ENCODE measurements at regions of chr3 and their contacts with region 1.

Region 1: DNA sequence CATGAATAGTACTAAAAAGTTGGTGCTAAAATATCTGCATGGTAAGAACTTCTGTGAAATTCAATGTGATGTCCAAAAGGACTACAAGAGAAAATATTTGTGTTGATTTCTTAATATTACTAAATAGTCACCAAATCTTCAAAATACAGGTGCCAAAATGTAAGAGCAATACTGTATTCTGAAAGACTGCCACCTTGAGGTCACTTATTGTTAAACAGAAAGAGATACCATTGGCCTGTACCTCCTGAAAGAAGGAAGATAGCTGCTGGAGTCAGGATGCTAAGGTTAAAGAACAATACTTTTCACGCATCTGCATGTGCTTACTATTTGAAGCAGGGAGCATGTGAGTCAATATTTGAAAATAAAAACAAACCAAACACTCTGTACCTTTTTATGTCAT is 72.0 kb upstream of the LSAMP start:
- DNase-seq: no peak
- H3K4me3 ChIP-seq: no peak overlapping the region
- H3K27ac ChIP-seq: no peak overlapping the region
- H3K4me1 ChIP-seq: no peaks in the 10 kb centered on the region
- H3K27me3 ChIP-seq: no peaks in the 10 kb centered on the region
- CTCF ChIP-seq: no peak
- EP300 ChIP-seq: no peak
- POLR2A ChIP-seq: no peak

Region 2: GRCh38 chr3:116579840-116580239 is 62.5 kb after region 1 on chr3:
- intact Hi-C with region 1: no loop called
- DNase-seq: no peak
- H3K4me3 ChIP-seq: no peak overlapping the region
- H3K27ac ChIP-seq: no peak overlapping the region
- H3K4me1 ChIP-seq: no peaks in the 10 kb centered on the region
- H3K27me3 ChIP-seq: no peaks in the 10 kb centered on the region
- CTCF ChIP-seq: no peak
- EP300 ChIP-seq: no peak
- POLR2A ChIP-seq: no peak

Region 3: GRCh38 chr3:116678853-116679252 is 161.5 kb after region 1 on chr3:
- intact Hi-C with region 1: no loop called
- DNase-seq: no peak
- H3K4me3 ChIP-seq: no peak overlapping the region
- H3K27ac ChIP-seq: no peak overlapping the region
- H3K4me1 ChIP-seq: no peaks in the 10 kb centered on the region
- H3K27me3 ChIP-seq: no peaks in the 10 kb centered on the region
- CTCF ChIP-seq: no peak
- EP300 ChIP-seq: no peak
- POLR2A ChIP-seq: no peak

Region 4: DNA sequence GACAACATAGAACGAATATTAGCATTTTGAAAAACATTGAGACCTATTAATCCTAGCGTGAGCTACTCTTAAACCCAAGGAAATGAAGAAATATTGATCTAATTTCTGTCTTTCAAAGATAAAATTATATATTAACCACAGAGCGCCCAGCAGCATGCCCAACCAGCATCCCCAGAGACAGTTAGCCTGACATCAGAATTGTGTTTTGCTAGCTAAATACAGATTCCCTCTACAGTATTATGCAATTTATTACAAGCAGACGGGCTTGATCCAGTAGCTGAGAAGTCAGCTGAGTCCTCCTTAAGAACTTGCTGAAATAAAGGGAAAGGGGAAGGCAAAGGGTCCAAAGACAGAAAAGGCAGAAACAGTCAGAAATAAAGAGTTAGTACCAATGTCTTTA is 185.0 kb after region 1 on chr3:
- intact Hi-C with region 1: no loop called
- DNase-seq: no peak
- H3K4me3 ChIP-seq: no peak overlapping the region
- H3K27ac ChIP-seq: no peak overlapping the region
- H3K4me1 ChIP-seq: no peaks in the 10 kb centered on the region
- H3K27me3 ChIP-seq: no peaks in the 10 kb centered on the region
- CTCF ChIP-seq: no peak
- EP300 ChIP-seq: no peak
- POLR2A ChIP-seq: no peak

Region 5: GRCh38 chr3:116886202-116886893 is 369.0 kb after region 1 on chr3:
- intact Hi-C with region 1: loop called in 1 of 4 experiments (anchors 5 kb)
- DNase-seq: no peak
- H3K4me3 ChIP-seq: no peak overlapping the region
- H3K27ac ChIP-seq: no peak overlapping the region
- H3K4me1 ChIP-seq: no peaks in the 10 kb centered on the region
- H3K27me3 ChIP-seq: no peaks in the 10 kb centered on the region
- CTCF ChIP-seq: no peak
- EP300 ChIP-seq: no peak
- POLR2A ChIP-seq: no peak

Region 6: DNA sequence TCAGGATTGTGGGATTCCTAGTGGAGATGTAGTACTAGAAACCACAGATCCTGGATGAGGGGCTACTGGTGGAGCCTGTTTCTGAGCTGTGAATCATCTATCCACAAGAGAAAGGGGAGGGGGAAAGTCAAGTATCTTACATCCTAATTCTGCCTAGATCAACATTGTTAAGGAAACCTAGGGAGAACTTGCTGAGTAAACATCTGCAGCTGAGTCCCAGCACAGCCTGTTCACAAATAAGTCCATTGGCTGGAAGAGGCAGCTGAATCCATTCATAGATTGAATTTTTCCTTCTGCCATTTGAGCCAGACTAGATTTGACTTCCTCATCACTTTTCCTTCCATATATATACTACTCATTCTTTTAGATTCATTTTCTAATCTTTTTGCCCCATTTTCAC is 652.8 kb after region 1 on chr3:
- intact Hi-C with region 1: loop called in 1 of 4 experiments (anchors 10 kb)
- DNase-seq: no peak
- H3K4me3 ChIP-seq: no peak overlapping the region
- H3K27ac ChIP-seq: no peak overlapping the region
- H3K4me1 ChIP-seq: no peaks in the 10 kb centered on the region
- H3K27me3 ChIP-seq: no peaks in the 10 kb centered on the region
- CTCF ChIP-seq: no peak
- EP300 ChIP-seq: no peak
- POLR2A ChIP-seq: no peak